Mammary epithelial cell (primary cell): ENCODE measurements at regions of chr4 and their contacts with region 1.

Region 1: GRCh38 chr4:57405385-57405784 is 295.2 kb upstream of the IGFBP7 start:
- DNase-seq: peak; percentile 90
- H3K4me3 ChIP-seq: no peak overlapping the region
- H3K27ac ChIP-seq: peak overlapping the region; percentile 69
- H3K4me1 ChIP-seq: peaks cover 27% of the 10 kb centered on the region
- H3K27me3 ChIP-seq: no peaks in the 10 kb centered on the region
- CTCF ChIP-seq: no peak

Region 2: DNA sequence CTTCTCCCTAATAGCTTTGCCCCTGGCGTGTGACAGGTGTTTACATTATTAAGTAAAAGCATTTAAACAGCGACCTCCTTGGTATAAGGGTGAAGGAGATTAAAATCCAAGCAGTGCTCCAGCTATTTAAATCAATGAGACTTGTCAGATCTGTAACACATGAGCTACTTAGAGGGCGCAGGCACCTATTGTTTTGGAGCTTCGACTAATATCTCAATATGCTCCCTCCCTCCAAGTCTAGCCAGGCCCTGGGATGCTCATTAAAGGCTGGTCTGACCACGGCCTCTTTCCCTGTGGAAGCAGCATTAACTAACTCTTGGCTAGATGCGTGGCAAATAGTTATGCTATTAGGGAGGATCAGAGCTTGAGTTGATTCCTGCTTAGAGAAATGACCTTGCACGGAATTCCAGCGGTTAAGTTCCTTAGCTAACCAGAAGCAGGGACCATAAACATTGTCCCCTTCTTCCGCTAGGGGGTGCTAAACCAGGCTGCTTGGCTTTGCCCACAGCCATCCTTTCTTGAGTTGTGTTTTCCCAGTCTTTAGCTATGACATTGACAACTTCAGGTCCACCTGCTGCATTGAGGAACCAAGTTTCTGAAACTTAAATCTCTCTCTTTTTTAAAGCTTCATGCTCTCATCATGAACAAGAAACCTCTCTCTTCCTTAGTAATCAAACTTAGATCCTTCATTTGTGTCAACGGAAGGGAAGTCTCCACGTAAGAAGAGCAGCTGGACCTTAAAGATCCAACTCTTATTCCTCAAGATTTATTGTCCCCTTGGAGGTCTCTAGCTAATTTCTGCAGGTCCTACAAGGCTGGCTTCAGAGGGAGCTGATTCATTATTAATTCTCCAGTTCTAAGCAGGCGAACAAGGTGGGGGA is 214.5 kb before region 1 on chr4:
- CTCF ChIA-PET with region 1: interaction called, 14 read pairs
- dilution Hi-C with region 1: no loop called
- in situ Hi-C with region 1: no loop called
- intact Hi-C with region 1: loop called (anchors 2 kb)
- DNase-seq: peak; percentile 11
- H3K4me3 ChIP-seq: no peak overlapping the region
- H3K27ac ChIP-seq: no peak overlapping the region
- H3K4me1 ChIP-seq: peaks cover 15% of the 10 kb centered on the region
- H3K27me3 ChIP-seq: no peaks in the 10 kb centered on the region
- CTCF ChIP-seq: peak; percentile 67

Region 3: GRCh38 chr4:57324673-57325307 is 80.6 kb before region 1 on chr4:
- CTCF ChIA-PET with region 1: no interaction called
- dilution Hi-C with region 1: no loop called
- in situ Hi-C with region 1: no loop called
- intact Hi-C with region 1: no loop called
- DNase-seq: no peak
- H3K4me3 ChIP-seq: no peak overlapping the region
- H3K27ac ChIP-seq: no peak overlapping the region
- H3K4me1 ChIP-seq: no peaks in the 10 kb centered on the region
- H3K27me3 ChIP-seq: no peaks in the 10 kb centered on the region
- CTCF ChIP-seq: no peak

Region 4: GRCh38 chr4:57426779-57427395 is 21.5 kb after region 1 on chr4:
- CTCF ChIA-PET with region 1: interaction called, 5 read pairs
- dilution Hi-C with region 1: no loop called
- in situ Hi-C with region 1: no loop called
- intact Hi-C with region 1: loop called (anchors 1 kb)
- DNase-seq: peak; percentile 61
- H3K4me3 ChIP-seq: no peak overlapping the region
- H3K27ac ChIP-seq: no peak overlapping the region
- H3K4me1 ChIP-seq: peaks cover 30% of the 10 kb centered on the region
- H3K27me3 ChIP-seq: no peaks in the 10 kb centered on the region
- CTCF ChIP-seq: peak; percentile 66 to 85

Region 5: GRCh38 chr4:57734104-57734670 is 328.8 kb after region 1 on chr4:
- CTCF ChIA-PET with region 1: no interaction called
- dilution Hi-C with region 1: no loop called
- in situ Hi-C with region 1: no loop called
- intact Hi-C with region 1: no loop called
- DNase-seq: no peak
- H3K4me3 ChIP-seq: no peak overlapping the region
- H3K27ac ChIP-seq: no peak overlapping the region
- H3K4me1 ChIP-seq: no peaks in the 10 kb centered on the region
- H3K27me3 ChIP-seq: no peaks in the 10 kb centered on the region
- CTCF ChIP-seq: no peak